Dorsolateral prefrontal cortex (tissue), 120 donors: ENCODE measurements at regions of chr5 and their contacts with region 1.

Region 1: GRCh38 chr5:131417240-131417869 is 153.5 kb downstream of the CDC42SE2 start:
- DNase-seq: peak; percentile 59 to 86 (median 76)
- H3K4me3 ChIP-seq: peak overlapping the region in 4 of 59 donors; percentile 7 to 27 (median 26)
- H3K27ac ChIP-seq: peak overlapping the region in 41 of 59 donors; percentile 1 to 82 (median 48)
- H3K27me3 ChIP-seq: no peaks in the 10 kb centered on the region
- CTCF ChIP-seq: peak; percentile 78 to 99 (median 92)

Region 2: DNA sequence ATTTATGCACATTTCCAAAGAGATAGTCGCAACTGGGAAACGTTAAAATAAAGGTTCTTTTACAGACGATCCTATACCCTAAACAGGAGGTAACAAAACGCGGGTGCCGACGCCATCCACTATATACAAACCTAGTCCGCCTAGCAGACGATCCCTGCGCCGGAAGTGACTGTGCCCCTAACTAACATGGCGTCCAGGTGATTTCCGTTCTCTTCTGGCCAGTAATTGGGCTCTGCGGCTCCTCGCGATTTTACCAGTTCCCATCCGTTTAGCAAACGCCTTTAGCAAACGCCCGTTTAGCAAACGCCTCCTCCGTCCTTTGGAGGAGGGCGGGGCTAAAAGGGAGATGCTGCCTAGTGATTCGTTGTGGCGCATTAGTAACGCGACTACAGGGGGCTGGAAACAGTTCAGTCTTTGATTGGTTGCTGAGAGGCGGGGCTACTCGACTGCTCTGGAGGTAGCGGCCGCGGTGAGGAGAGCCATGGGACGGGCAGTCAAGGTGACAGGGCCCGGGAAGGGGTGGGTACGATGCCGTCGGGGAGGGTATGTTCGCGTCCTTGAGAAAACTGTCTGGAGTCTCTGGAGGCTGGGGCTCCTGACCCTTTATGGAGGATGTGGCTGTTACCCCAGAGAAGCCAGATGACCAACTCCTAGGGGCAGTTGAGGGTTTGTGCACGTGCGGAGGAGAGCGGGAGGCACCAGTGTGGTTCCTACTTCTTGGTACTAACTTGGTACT is 246.6 kb before region 1 on chr5 and contains the start of gene LYRM7:
- intact Hi-C with region 1: loop called (anchors 2 to 10 kb)
- DNase-seq: peak; percentile 84 to 99 (median 96)
- H3K4me3 ChIP-seq: peak within 1 kb of the TSS; percentile 60 to 92 (median 80)
- H3K27ac ChIP-seq: peak within 1 kb of the TSS; percentile 57 to 99 (median 91)
- H3K27me3 ChIP-seq: no peaks in the 10 kb centered on the region
- CTCF ChIP-seq: peak in 34 of 56 donors; percentile 3 to 57 (median 32)
- total RNA-seq, gene LYRM7: 15.9 to 37.3 (median 23.7) TPM